Mammary epithelial cell (primary cell): ENCODE measurements at regions of chr7 and their contacts with region 1.

Region 1: GRCh38 chr7:149067876-149068275 is 22.6 kb downstream of the ZNF786 start:
- DNase-seq: no peak
- H3K4me3 ChIP-seq: no peak overlapping the region
- H3K27ac ChIP-seq: no peak overlapping the region
- H3K4me1 ChIP-seq: no peaks in the 10 kb centered on the region
- H3K27me3 ChIP-seq: no peaks in the 10 kb centered on the region
- CTCF ChIP-seq: peak; percentile 24 to 37

Region 2: DNA sequence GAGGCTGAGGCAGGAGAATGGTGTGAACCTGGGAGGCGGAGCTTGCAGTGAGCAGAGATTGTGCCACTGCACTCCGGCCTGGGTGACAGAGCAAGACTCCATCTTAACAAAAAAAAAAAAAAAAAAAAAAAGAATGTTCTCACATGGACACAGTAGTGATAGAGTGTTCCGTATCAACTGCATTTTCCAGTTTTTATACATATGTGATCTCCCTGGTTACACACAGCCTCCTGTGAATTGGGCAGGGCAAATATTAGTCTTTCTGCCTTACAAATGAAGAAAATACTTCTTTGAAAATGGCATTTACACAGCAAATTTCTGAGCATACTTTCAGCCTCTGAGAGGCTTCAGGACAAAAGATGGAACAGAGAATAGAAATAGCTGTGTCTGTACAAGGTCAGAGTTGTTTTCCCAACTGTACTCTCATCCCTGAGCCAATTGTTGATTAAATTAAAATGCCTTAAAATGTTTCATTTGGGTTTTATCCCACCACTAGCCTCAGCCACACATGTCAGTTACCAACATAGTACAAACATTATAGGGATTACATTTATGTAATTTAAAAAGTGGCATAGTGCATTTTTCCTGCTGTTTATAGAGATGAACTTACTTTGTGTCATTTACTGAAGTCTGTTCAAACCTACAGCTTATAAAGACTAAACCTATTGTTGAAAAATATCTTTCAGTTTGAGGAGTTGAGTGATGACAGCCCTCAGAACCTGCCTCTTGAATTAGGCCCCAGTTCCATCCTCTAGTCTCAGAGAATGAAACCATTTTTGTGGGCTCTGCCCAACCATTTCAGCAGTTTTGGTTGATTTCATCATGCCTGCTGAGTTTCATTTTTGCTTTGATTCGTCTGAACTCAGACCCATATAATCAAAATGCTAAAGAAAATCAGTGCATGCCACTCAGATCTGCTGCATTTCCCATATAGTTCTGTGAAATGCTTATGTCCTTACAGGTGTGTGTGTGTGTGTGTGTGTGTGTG is 1086.8 kb before region 1 on chr7:
- CTCF ChIA-PET with region 1: no interaction called
- dilution Hi-C with region 1: no loop called
- in situ Hi-C with region 1: no loop called
- intact Hi-C with region 1: no loop called
- DNase-seq: no peak
- H3K4me3 ChIP-seq: no peak overlapping the region
- H3K27ac ChIP-seq: no peak overlapping the region
- H3K4me1 ChIP-seq: no peaks in the 10 kb centered on the region
- H3K27me3 ChIP-seq: no peaks in the 10 kb centered on the region
- CTCF ChIP-seq: no peak

Region 3: DNA sequence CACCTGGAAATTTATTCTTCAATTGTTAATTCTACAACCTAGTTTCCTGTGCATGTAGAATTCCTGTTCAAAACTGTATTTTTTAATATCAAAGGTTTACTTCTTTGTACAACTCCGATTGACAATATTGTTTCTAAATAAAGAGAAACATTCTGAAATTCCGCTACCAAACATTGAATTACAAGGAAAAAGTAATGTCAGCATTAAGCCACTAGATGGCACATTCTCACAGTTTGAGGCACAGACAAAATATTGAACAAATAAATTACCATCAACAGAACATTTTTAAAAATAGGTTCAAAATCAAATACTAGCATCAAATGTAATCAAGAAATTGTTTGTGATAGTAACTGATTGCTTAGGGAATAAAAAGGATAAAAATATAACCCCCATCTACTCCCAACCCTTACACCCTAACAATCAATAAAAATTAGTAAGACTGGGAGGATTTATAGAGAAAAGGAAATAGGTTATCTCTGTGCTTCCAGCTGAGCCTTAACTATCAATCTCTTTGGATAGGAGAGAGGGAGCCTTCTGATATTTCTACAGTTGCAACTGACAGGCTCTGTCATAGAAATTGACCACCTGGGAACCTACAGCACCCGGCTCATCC is 563.9 kb before region 1 on chr7:
- CTCF ChIA-PET with region 1: no interaction called
- dilution Hi-C with region 1: no loop called
- in situ Hi-C with region 1: no loop called
- intact Hi-C with region 1: loop called (anchors 5 kb)
- DNase-seq: peak; percentile 15
- H3K4me3 ChIP-seq: no peak overlapping the region
- H3K27ac ChIP-seq: no peak overlapping the region
- H3K4me1 ChIP-seq: no peaks in the 10 kb centered on the region
- H3K27me3 ChIP-seq: peaks cover 3% of the 10 kb centered on the region
- CTCF ChIP-seq: peak; percentile 71 to 86

Region 4: GRCh38 chr7:148939128-148939755 is 128.6 kb before region 1 on chr7:
- CTCF ChIA-PET with region 1: no interaction called
- dilution Hi-C with region 1: no loop called
- in situ Hi-C with region 1: no loop called
- intact Hi-C with region 1: no loop called
- DNase-seq: no peak
- H3K4me3 ChIP-seq: no peak overlapping the region
- H3K27ac ChIP-seq: no peak overlapping the region
- H3K4me1 ChIP-seq: no peaks in the 10 kb centered on the region
- H3K27me3 ChIP-seq: no peaks in the 10 kb centered on the region
- CTCF ChIP-seq: no peak

Region 5: DNA sequence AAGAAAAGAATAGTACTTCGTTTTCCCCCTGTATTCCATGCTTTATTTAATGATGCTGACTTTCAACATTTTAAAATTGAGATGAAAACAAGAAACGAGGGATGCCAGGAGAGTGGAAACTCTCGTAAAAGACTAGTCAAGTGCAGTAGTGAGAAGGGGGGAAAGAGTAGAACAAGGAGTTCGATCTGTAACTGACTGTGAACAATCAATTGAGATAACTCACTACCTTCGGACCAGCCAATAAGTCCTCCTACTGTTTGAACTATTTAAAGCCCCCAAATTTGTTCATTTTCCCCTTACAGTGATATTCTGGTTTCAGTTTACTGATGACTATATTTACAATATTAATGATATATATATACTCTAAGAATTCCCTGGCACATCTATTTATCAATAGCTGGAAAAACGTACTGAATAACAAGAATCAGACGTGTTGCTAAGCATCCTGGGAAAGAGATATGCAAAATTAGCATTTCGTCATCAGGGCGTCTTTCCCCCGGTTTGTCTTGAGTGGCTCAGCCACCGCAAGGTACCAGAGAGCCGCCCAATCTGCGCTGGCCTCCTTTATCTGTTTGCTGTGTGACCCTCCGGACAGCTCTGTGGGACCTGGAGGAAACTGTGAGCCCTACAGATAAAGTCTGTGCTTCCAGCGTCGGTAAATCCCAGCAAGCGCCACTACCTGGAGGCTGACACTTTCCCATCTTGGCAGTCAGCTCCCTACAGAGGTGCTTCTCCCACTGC is 80.7 kb before region 1 on chr7:
- CTCF ChIA-PET with region 1: no interaction called
- dilution Hi-C with region 1: no loop called
- in situ Hi-C with region 1: no loop called
- intact Hi-C with region 1: loop called (anchors 1 kb)
- DNase-seq: peak; percentile 81
- H3K4me3 ChIP-seq: peak overlapping the region; percentile 54 to 59 (median 56)
- H3K27ac ChIP-seq: peak overlapping the region; percentile 84
- H3K4me1 ChIP-seq: peaks cover 29% of the 10 kb centered on the region
- H3K27me3 ChIP-seq: no peaks in the 10 kb centered on the region
- CTCF ChIP-seq: no peak

Region 6: GRCh38 chr7:149005241-149006050 is 62.4 kb before region 1 on chr7:
- CTCF ChIA-PET with region 1: no interaction called
- dilution Hi-C with region 1: no loop called
- in situ Hi-C with region 1: no loop called
- intact Hi-C with region 1: loop called (anchors 1 kb)
- DNase-seq: peak; percentile 23
- H3K4me3 ChIP-seq: no peak overlapping the region
- H3K27ac ChIP-seq: no peak overlapping the region
- H3K4me1 ChIP-seq: no peaks in the 10 kb centered on the region
- H3K27me3 ChIP-seq: no peaks in the 10 kb centered on the region
- CTCF ChIP-seq: peak; percentile 59 to 75

Region 7: GRCh38 chr7:149028346-149029109 is 39.3 kb before region 1 on chr7 and contains the start of gene PDIA4:
- CTCF ChIA-PET with region 1: no interaction called
- dilution Hi-C with region 1: no loop called
- in situ Hi-C with region 1: no loop called
- intact Hi-C with region 1: loop called (anchors 1 kb)
- DNase-seq: peak; percentile 100
- H3K4me3 ChIP-seq: peak within 1 kb of the TSS; percentile 82 to 93 (median 90)
- H3K27ac ChIP-seq: peak within 1 kb of the TSS; percentile 75
- H3K4me1 ChIP-seq: peaks cover 21% of the 10 kb centered on the region
- H3K27me3 ChIP-seq: no peaks in the 10 kb centered on the region
- CTCF ChIP-seq: peak in 1 of 2 donors; percentile 31
- total RNA-seq, gene PDIA4: 175 to 189 TPM

Region 8: DNA sequence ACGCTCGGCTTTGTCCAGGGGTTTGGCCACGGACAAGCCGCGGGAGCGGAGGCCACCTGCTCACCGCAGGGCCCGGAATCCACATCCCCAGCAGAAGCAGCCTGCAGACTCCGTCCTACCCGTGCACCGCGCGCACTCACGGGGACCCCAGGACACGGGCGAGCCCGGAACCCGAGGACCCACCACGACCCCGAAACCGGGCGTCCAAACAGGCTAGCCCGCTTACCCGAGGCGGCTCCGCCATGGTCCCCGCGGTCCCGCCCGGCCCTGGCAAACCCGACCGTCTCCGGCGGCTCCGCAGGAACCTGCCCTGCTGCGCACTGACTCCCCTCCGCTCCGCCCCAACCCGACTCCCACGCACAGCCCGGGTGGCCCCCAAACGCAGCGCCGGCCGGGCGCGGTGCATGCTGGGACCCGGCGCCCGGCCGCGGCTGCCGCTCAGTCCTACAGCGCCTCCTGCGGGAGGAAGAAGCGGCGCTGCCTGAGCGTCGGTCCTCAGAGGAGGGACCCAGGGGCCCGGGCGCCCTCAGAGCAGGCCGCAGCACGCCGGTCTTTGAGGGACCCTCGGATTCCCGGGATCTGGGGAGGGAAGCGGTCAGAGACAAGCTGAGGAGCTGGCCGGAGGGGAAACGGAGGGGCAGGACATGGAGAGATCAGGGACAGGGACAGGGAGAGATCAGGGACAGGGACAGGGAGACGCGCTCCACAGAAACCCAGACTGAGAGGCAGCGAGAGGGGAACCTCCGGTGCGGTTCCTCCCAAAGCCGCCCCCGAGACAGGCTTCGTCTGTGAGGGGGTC is 22.7 kb after region 1 on chr7 and contains the start of gene ZNF786:
- CTCF ChIA-PET with region 1: no interaction called
- dilution Hi-C with region 1: no loop called
- in situ Hi-C with region 1: no loop called
- intact Hi-C with region 1: loop called (anchors 1 kb)
- DNase-seq: peak; percentile 84
- H3K4me3 ChIP-seq: peak within 1 kb of the TSS; percentile 78 to 99 (median 94)
- H3K27ac ChIP-seq: peak within 1 kb of the TSS; percentile 58
- H3K4me1 ChIP-seq: peaks cover 7% of the 10 kb centered on the region
- H3K27me3 ChIP-seq: no peaks in the 10 kb centered on the region
- CTCF ChIP-seq: peak; percentile 58 to 87
- total RNA-seq, gene ZNF786: 5.3 to 15.7 TPM

Region 9: DNA sequence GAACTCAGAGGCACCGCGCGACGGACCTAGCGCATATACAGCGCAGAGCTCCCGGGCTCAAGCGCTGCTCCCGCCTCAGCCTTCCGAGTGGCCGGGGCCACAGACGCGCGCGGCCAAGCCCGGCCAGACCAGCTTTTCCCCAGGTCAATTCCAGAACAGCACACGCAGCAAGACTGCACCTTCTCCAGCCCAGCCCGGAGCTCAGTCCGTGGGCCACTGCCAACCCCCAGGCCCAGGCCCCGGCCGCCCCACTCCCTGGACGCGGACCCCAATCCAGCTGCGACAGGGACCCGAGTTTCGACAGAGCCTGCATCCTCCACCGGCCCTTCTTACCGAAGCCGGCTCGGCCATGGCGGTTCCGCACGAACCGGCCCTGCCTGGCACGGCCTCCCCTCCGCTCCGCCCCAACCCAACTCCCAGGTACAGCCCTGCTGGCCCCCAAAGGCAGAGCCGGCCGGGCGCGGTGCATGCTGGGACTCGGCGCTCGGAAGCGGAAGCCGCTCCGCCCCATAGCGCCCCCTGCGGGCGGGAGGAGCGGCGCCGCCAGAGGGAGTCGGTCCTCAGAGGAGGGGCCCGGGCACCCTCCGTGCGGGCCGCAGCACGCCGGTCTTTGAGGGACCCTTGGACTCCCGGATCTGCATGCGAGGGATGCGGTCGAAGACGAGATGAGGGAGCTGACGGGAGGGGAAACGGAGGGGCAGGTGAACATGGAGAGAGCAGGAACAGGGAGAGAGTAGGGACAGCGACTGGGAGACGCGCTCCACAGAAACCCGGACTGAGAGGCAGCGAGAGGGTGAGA is 58.2 kb after region 1 on chr7 and contains the start of gene ZNF425:
- CTCF ChIA-PET with region 1: interaction called, 3 read pairs
- dilution Hi-C with region 1: loop called (anchors 5 kb)
- in situ Hi-C with region 1: no loop called
- intact Hi-C with region 1: loop called (anchors 1 kb)
- DNase-seq: peak; percentile 92
- H3K4me3 ChIP-seq: peak within 1 kb of the TSS; percentile 67 to 87 (median 78)
- H3K27ac ChIP-seq: peak within 1 kb of the TSS; percentile 93
- H3K4me1 ChIP-seq: peaks cover 7% of the 10 kb centered on the region
- H3K27me3 ChIP-seq: no peaks in the 10 kb centered on the region
- CTCF ChIP-seq: peak; percentile 61 to 94
- total RNA-seq, gene ZNF425: 3.0 to 3.3 TPM

Region 10: GRCh38 chr7:149229526-149229925 is 161.7 kb after region 1 on chr7:
- CTCF ChIA-PET with region 1: no interaction called
- dilution Hi-C with region 1: no loop called
- in situ Hi-C with region 1: no loop called
- intact Hi-C with region 1: no loop called
- DNase-seq: no peak
- H3K4me3 ChIP-seq: no peak overlapping the region
- H3K27ac ChIP-seq: no peak overlapping the region
- H3K4me1 ChIP-seq: peaks cover 19% of the 10 kb centered on the region
- H3K27me3 ChIP-seq: no peaks in the 10 kb centered on the region
- CTCF ChIP-seq: no peak